ENCODE measurements at regions of chr19 and their contacts with region 1.

Region 1: GRCh38 chr19:47296036-47296435 is 13.6 kb upstream of the C5AR1 start:
- DNase-seq: peak; percentile 79
- H3K4me3 Mint-ChIP-seq: no peak overlapping the region
- H3K27ac Mint-ChIP-seq: no peak overlapping the region
- H3K4me1 Mint-ChIP-seq: peaks cover 2% of the 10 kb centered on the region
- H3K27me3 Mint-ChIP-seq: no peaks in the 10 kb centered on the region

Region 2: GRCh38 chr19:47284324-47284899 is 11.6 kb before region 1 on chr19:
- CTCF ChIA-PET with region 1: interaction called, 11 read pairs
- POLR2A ChIA-PET with region 1: interaction called, 5 read pairs
- intact Hi-C with region 1: no loop called
- DNase-seq: no peak
- H3K4me3 Mint-ChIP-seq: no peak overlapping the region
- H3K27ac Mint-ChIP-seq: no peak overlapping the region
- H3K4me1 Mint-ChIP-seq: peaks cover 10% of the 10 kb centered on the region
- H3K27me3 Mint-ChIP-seq: no peaks in the 10 kb centered on the region

Region 3: GRCh38 chr19:47348819-47349795 is 53.1 kb after region 1 on chr19 and contains the start of gene DHX34:
- CTCF ChIA-PET with region 1: interaction called, 11 read pairs
- POLR2A ChIA-PET with region 1: no interaction called
- intact Hi-C with region 1: no loop called
- DNase-seq: peak; percentile 100
- H3K4me3 Mint-ChIP-seq: peak within 1 kb of the TSS; percentile 97
- H3K27ac Mint-ChIP-seq: peak within 1 kb of the TSS; percentile 89
- H3K4me1 Mint-ChIP-seq: peaks cover 43% of the 10 kb centered on the region
- H3K27me3 Mint-ChIP-seq: no peaks in the 10 kb centered on the region
- total RNA-seq, gene DHX34: 12.7 to 15.7 TPM

Region 4: DNA sequence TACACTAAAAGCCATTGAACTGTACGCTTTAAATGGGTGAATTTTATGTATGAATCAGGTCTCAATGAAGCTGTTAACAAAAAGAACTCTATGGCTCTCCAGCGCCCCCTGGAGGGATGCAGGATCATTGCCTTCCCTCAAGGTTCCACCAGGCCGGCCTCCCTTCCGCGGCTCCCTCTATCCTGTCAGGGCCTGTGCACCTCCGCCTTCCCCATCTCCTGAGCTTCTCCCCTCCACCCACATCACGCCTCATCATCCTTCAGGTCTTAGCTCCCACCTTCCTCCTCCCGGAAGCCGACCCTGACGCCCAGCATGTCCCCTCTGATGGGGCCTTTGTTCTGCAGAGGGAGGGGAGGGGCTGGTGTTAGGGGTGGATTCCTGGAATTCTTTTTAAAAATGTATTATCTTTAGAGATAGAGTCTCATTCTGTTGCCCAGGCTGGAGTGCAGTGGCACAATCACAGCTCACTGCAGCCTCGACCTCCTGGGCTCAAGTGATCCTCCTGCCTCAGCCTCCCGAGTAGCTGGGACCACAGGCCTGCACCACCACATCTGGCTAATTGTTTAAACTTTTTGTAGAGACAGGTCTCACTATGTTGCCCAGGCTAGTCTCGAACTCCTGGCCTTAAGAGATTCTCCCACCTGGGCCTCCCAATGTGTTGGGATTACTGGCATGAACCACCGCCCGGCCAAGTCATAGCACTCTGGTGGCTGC is 95.6 kb after region 1 on chr19:
- CTCF ChIA-PET with region 1: interaction called, 89 read pairs
- POLR2A ChIA-PET with region 1: no interaction called
- intact Hi-C with region 1: loop called (anchors 1 kb)
- DNase-seq: peak; percentile 87
- H3K4me3 Mint-ChIP-seq: no peak overlapping the region
- H3K27ac Mint-ChIP-seq: no peak overlapping the region
- H3K4me1 Mint-ChIP-seq: no peaks in the 10 kb centered on the region
- H3K27me3 Mint-ChIP-seq: peaks cover 5% of the 10 kb centered on the region

Region 5: DNA sequence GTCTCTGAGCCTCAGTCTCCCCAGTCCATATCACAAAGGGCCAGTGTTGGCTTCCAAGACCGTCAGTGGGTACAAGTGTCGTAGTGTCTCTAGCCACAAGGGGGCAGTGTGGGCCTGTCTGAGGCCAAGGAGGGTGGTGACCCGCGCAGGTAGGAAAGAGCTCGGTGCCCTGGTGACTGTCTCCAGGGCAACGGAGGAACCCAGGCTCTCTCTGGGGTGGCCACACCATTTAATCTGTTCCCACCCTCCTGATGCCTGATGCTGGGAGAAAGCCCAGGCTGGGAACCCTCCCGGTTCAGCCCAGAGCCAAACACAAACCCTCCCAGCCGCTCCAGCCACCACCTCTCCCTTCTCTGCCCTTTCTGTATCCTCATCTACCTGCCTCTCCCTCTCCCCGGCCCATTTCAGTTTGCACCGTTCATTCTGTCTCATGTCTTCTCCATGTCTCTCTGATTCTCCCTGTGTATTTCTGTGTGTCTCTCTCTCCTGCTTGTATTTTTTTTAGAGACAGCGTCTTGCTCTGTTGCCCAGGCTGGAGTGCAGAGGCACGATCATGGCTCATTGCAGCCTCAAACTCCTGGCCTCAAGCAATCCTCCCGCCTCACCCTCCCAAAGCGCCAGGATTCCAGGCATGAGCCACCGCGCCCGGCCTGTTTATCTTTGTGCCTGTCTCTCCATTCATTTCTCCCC is 140.8 kb after region 1 on chr19:
- CTCF ChIA-PET with region 1: no interaction called
- POLR2A ChIA-PET with region 1: no interaction called
- intact Hi-C with region 1: no loop called
- DNase-seq: peak; percentile 89
- H3K4me3 Mint-ChIP-seq: no peak overlapping the region
- H3K27ac Mint-ChIP-seq: no peak overlapping the region
- H3K4me1 Mint-ChIP-seq: peaks cover 15% of the 10 kb centered on the region
- H3K27me3 Mint-ChIP-seq: peaks cover 38% of the 10 kb centered on the region

Region 6: GRCh38 chr19:47707135-47707925 is 411.3 kb after region 1 on chr19:
- CTCF ChIA-PET with region 1: interaction called, 4 read pairs
- POLR2A ChIA-PET with region 1: no interaction called
- intact Hi-C with region 1: loop called (anchors 5 kb)
- DNase-seq: peak; percentile 88
- H3K4me3 Mint-ChIP-seq: no peak overlapping the region
- H3K27ac Mint-ChIP-seq: no peak overlapping the region
- H3K4me1 Mint-ChIP-seq: no peaks in the 10 kb centered on the region
- H3K27me3 Mint-ChIP-seq: peaks cover 6% of the 10 kb centered on the region